ENCODE measurements at regions of chr2 and their contacts with region 1.

Region 1: GRCh38 chr2:237474931-237475703 is 11.9 kb upstream of the MLPH start:
- DNase-seq: peak; percentile 95

Region 2: DNA sequence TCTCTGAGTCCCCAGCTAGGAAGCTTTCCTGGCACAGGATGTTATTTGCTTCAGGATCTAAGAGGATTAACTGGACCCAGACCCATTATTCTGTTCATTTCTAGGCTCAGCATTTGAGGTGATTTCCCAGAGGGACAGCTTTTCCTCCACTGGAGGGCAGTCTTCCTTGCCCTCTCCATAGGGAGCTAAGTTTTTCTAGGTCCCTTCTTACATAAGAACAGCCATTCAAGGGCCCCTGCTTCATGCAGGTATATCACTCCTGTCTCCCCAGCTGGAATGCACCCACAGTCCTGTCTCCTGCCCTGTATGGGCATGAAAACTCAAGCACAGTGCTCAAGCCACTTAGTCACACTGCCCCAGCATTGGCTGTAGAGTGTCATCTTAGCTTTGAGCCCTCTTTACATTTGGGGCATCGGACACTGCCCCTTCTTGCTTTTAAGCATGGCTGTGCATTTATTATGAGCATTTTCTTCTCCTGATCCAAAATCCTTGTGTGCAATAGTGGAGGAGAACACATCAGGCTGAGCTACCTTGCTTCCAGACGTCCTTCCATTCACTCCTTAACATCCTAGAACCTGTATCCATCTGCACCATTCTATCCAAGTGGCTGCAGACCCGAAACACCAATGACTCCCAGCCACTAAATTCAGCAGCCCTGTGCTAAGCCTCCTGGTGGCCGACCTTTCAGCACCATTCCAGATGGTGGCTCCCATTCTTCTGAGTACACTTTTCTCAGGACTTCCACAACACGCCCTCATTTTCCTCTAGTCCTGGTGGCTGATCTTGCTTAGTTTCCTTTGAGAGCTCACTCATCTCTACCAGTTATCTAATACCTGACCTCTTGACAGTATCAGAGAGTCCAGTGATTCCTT is 309.5 kb before region 1 on chr2:
- intact Hi-C with region 1: loop called in 1 of 2 experiments (anchors 10 kb)
- DNase-seq: no peak

Region 3: DNA sequence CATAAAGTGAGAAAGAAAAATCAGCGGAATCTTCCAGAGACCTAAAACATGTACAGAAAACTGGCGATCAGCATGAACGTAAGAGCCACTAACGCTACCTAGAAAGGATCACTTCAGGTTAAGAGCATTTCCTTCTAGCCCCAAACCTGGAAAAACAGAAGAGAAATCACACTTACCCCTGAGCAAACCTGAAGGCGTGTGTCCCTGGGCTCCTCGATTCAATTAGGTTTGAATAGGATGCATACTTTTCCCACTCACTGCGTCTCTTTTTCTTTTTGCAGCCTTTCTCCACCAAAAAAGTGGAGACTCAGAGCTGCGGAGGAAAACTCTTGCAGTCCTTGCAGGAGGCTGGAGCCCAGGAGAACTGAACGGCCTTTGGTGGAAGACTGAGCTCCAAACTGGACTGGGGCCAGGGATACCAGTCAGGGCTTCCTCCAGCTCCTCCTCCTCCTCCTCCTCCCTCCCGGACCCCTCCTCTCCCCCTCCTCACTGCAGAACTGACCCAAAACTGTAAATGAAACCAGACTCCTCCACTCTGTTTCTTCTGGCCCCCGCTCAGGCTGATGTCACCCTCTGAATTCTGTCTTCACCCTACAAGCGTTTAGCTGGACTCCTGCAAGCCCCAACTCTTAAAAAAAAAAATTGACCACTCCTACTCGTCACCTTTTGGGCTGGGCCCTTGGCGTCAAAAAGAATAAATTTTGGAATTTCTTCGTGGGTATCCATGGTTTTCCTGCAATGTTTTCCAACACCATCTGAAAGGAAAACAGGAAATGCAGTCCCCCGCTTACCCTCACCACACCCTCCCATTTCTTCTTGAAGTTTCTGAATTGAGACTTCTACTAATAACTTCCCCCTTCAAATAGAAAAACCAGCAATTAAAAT is 61.1 kb before region 1 on chr2 and contains the start of gene COL6A3:
- intact Hi-C with region 1: loop called in 1 of 2 experiments (anchors 10 kb)
- DNase-seq: peak; percentile 90
- total RNA-seq, gene COL6A3: 485 to 835 TPM

Region 4: DNA sequence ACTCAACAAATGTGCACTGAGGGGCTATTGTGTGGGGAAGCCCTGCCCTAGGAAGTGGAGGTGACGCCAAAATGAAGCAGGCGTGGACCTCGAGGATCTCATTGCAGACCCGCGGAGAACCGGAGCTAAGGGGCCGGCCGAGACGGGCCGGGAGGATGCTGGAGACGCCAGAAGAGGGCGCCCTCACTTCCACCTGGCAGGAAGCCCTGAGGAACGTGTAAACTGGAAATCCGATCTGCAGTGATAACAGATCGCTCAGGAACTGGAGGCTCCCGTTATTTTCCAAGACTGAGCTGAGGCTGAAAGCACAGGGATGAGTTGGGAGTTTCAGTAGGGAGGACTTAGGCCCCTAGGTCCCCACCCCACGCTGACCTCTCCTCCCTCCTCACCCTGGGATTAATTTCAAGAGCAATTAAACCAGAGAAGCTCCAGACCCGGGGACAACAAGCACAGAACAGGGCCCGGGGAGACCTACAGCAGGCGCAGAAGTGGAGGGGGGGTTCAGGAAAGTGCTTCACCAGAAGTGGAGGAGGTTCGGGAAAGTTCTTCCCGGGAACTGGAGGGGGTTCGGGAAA is 53.5 kb before region 1 on chr2:
- intact Hi-C with region 1: loop called (anchors 5 to 10 kb)
- DNase-seq: peak; percentile 95

Measured in posterior vena cava (tissue), 2 donors.